ENCODE measurements at regions of chr16 and their contacts with region 1.

Region 1: GRCh38 chr16:27401768-27402568 is at the start of gene IL21R:
- DNase-seq: peak; percentile 78
- H3K4me3 Mint-ChIP-seq: peak within 1 kb of the TSS; percentile 99
- H3K27ac Mint-ChIP-seq: peak within 1 kb of the TSS; percentile 99
- H3K4me1 Mint-ChIP-seq: peaks cover 45% of the 10 kb centered on the region
- H3K27me3 Mint-ChIP-seq: no peaks in the 10 kb centered on the region
- total RNA-seq, gene IL21R: 84.2 and 84.5 TPM in 2 replicates

Region 2: DNA sequence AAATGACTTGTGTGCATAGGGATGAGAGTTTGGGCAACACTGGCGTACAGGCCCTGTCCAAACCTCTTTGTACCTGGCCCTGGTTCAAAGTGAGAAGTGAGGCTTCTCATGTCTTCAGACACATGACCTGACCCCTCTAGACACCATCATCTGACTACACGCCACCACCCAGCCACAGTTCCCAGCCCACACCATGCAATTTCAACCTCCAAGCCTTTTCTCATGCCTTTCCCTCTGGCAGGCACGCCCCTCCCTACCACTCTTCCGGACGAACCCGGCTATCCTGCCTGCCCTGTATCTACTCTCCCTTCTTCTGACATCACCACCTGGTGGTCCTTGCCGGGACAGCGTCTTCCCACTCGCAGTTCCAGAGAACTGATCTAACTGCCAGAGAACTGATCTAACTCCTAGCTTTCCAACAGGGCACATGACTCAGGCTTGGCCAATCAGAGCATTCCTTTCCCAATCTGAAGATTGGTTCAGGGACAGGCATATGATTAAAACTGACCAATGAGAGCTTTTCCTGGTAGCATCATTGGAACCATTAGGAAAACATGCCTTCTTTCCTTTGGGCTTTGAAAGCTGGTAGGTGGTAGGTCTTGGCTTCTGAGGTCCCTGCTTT is 27.1 kb before region 1 on chr16:
- intact Hi-C with region 1: loop called (anchors 1 kb)
- DNase-seq: no peak
- H3K4me3 Mint-ChIP-seq: no peak overlapping the region
- H3K27ac Mint-ChIP-seq: no peak overlapping the region
- H3K4me1 Mint-ChIP-seq: peaks cover 30% of the 10 kb centered on the region
- H3K27me3 Mint-ChIP-seq: no peaks in the 10 kb centered on the region

Region 3: DNA sequence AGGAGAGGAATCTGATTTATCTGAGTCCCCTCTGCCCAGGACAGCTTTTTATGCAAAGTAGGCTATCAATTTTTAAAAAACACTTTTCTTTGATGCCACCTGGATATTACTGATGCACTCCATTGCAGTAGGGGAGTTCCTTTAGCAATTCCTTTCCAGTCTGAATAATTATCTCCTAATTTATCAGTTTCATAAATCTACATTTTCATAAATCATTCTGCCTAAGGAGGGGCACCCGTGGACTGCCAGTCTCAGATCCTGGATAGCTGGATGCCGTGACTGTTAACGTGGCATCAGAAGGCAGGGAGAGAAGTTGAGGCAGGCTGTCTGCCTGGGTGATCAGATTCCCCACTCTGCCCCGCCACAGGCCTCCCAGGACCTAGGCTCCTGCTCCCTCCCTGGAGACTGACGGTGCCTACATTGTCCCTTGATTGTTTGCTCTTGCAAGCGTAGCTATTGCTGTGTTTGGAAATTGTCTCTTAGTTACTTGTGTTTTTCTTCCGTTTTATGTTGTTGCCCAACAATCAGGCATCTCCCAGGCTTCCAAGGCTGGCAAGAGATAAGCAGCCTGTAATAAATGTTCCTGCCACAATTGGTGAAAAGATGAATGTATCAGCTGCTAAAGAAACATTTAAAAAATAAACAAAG is 223.2 kb after region 1 on chr16:
- intact Hi-C with region 1: no loop called
- DNase-seq: no peak
- H3K4me3 Mint-ChIP-seq: no peak overlapping the region
- H3K27ac Mint-ChIP-seq: no peak overlapping the region
- H3K4me1 Mint-ChIP-seq: no peaks in the 10 kb centered on the region
- H3K27me3 Mint-ChIP-seq: no peaks in the 10 kb centered on the region